HEK293T (cell line): ENCODE measurements at regions of chr11 and their contacts with region 1.

Region 1: DNA sequence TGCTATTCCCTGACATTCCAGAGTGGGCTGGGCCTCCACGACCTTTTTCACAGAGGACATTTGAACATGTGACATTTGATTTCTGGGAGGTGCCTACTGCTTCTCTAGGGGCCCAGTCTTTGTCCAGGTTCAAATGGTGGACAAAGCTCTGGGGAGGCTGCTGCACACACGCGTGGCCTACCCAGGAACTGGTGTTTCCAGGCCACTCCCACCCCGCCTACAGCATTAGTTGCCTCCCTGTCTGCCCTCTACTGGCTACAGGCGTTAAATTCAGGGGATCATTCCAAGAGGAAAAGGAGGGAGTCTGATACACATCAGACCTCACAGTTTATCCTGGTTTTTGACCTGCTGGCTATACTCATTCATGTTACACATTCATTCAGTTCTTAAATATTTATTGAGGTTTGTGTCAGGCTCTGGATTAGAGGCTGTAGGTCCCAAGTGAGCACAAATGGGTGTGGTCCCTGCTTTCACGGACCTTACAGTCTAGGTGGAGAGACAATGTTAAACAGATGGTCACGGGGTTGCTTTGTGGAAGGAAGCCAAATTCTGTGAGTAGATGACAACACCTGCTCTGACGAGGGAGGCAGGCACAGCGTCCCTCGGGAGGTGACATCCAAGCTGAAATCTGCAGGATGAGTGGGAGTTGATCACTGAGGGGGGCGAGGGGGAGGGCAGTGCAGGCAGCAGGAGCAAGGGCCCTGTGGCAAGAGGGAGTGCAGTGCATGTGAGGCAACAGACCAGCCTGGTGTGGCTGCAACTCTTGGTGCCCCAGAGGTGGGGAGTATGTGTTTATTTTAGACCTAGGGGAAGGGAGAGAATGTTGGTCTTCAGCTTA is 11.8 kb downstream of the TUB start:
- DNase-seq: peak; percentile 72

Region 2: GRCh38 chr11:7918127-7918526 is 174.7 kb before region 1 on chr11:
- CTCF ChIA-PET with region 1: no interaction called
- POLR2A ChIA-PET with region 1: no interaction called
- DNase-seq: no peak

Region 3: GRCh38 chr11:8033305-8034105 is 59.3 kb before region 1 on chr11:
- CTCF ChIA-PET with region 1: interaction called, 31 read pairs
- POLR2A ChIA-PET with region 1: interaction called, 4 read pairs
- DNase-seq: peak; percentile 86

Region 4: DNA sequence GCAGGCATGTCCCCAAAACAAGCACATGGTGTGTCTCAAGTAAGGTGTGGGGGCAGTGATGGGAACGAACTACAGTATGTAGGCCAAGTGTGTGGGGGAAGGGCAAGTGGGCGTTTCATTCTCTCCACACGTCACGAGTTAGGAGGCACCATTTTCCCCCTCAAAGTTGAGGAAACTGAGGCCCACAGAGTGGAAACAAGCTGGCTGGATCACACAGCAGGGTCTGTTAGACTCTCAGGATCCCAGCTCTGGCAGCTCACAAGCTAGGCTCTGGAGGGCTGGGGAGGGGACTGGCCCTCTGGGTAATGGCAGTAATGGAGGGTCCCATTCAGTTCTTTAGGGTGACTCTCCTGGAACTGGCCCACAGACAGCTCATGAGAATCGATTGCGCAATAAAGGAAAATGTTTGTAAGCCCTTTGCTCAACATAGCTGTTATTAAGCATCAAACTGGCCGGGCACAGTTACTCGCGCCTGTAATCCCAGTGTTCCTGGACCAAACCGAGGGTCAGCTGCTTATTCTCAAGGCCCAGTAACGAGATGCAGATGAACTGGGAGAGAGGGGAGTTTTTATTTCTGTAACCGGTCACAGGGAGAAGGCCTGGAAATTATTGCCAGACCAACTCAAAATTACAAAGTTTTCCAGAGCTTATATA is 35.9 kb before region 1 on chr11:
- CTCF ChIA-PET with region 1: interaction called, 11 read pairs
- POLR2A ChIA-PET with region 1: interaction called, 3 read pairs
- DNase-seq: no peak

Region 5: GRCh38 chr11:8080674-8081590 is 11.9 kb before region 1 on chr11 and contains the start of gene TUB:
- CTCF ChIA-PET with region 1: interaction called, 11 read pairs
- POLR2A ChIA-PET with region 1: interaction called, 3 read pairs
- DNase-seq: peak; percentile 76